ENCODE measurements at regions of chr9 and their contacts with region 1.

Region 1: DNA sequence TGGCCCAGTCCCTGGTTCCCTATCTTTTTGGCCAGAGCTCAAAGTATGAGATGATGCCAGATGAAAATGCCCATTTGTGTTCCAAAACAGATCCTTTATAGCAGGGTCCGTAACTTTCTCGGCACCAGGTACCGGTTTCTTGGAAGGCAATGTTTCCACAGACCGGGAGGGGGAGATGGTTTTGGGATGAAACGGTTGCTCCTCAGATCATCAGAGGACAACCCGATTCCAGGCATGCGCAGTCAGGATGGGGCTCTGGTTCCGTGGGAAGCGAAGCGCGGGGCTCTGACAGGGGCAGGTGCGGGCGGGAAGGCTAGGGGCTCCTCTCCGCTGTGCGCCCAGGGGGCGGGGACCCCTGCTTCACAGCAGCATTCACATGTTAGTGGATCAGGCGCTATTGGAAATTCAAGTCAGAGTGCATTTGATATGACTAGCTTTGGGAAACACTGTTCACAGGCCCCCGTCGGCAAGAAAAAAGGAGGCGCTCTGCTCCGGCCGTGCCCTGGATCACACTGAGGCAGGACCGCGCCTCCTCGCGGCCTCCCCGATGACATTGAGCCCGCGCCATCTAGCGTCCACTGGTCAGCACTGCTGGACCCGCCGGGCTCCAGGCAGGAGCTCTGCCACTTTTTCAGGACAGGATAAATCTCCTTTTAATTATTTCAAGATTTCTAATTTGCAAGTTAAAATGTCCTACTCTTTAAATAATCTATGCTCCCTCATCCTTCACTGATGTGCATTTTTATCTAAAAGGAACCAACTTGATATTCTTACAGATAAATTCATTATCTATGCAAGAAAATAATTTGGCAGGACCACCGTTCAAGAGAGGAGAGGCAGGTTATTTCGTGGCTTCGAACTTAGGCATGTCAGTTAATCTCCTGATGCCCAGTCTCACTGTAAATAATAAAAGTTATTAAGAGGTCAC is 190.0 kb downstream of the FANCC start:
- DNase-seq: peak; percentile 92 to 96
- ATAC-seq: peak; percentile 94
- H3K4me3 ChIP-seq: peak overlapping the region; percentile 4 to 39
- H3K27ac ChIP-seq: peak overlapping the region in 1 of 2 donors; percentile 72
- H3K4me1 ChIP-seq: peaks cover 0 to 6% of the 10 kb centered on the region in 2 donors
- H3K27me3 ChIP-seq: no peaks in the 10 kb centered on the region

Region 2: GRCh38 chr9:94668418-94668932 is 459.0 kb before region 1 on chr9:
- intact Hi-C with region 1: loop called in 1 of 2 experiments (anchors 5 kb)
- DNase-seq: no peak
- ATAC-seq: no peak
- H3K4me3 ChIP-seq: no peak overlapping the region
- H3K27ac ChIP-seq: no peak overlapping the region
- H3K4me1 ChIP-seq: no peaks in the 10 kb centered on the region
- H3K27me3 ChIP-seq: no peaks in the 10 kb centered on the region

Region 3: GRCh38 chr9:94681508-94681907 is 446.0 kb before region 1 on chr9:
- intact Hi-C with region 1: loop called (anchors 5 kb)
- DNase-seq: peak; percentile 86 to 90
- ATAC-seq: peak; percentile 95
- H3K4me3 ChIP-seq: no peak overlapping the region
- H3K27ac ChIP-seq: peak overlapping the region in 1 of 2 donors; percentile 68
- H3K4me1 ChIP-seq: no peaks in the 10 kb centered on the region
- H3K27me3 ChIP-seq: no peaks in the 10 kb centered on the region

Region 4: GRCh38 chr9:94772639-94773303 is 354.7 kb before region 1 on chr9:
- intact Hi-C with region 1: loop called in 1 of 2 experiments (anchors 5 kb)
- DNase-seq: peak in 1 of 2 donors; percentile 56
- ATAC-seq: peak; percentile 22
- H3K4me3 ChIP-seq: no peak overlapping the region
- H3K27ac ChIP-seq: peak overlapping the region in 1 of 2 donors; percentile 91
- H3K4me1 ChIP-seq: peaks cover 2 to 5% of the 10 kb centered on the region in 2 donors
- H3K27me3 ChIP-seq: no peaks in the 10 kb centered on the region

Region 5: GRCh38 chr9:95073021-95073607 is 54.4 kb before region 1 on chr9:
- intact Hi-C with region 1: loop called in 1 of 2 experiments (anchors 5 kb)
- DNase-seq: peak in 1 of 2 donors; percentile 61
- ATAC-seq: peak; percentile 24
- H3K4me3 ChIP-seq: no peak overlapping the region
- H3K27ac ChIP-seq: peak overlapping the region in 1 of 2 donors; percentile 87
- H3K4me1 ChIP-seq: peaks cover 7 to 8% of the 10 kb centered on the region in 2 donors
- H3K27me3 ChIP-seq: no peaks in the 10 kb centered on the region

Measured in aorta (tissue), 5 donors.